Naive thymus-derived CD4-positive, alpha-beta T cell (primary cell): ENCODE measurements at regions of chr17 and their contacts with region 1.

Region 1: DNA sequence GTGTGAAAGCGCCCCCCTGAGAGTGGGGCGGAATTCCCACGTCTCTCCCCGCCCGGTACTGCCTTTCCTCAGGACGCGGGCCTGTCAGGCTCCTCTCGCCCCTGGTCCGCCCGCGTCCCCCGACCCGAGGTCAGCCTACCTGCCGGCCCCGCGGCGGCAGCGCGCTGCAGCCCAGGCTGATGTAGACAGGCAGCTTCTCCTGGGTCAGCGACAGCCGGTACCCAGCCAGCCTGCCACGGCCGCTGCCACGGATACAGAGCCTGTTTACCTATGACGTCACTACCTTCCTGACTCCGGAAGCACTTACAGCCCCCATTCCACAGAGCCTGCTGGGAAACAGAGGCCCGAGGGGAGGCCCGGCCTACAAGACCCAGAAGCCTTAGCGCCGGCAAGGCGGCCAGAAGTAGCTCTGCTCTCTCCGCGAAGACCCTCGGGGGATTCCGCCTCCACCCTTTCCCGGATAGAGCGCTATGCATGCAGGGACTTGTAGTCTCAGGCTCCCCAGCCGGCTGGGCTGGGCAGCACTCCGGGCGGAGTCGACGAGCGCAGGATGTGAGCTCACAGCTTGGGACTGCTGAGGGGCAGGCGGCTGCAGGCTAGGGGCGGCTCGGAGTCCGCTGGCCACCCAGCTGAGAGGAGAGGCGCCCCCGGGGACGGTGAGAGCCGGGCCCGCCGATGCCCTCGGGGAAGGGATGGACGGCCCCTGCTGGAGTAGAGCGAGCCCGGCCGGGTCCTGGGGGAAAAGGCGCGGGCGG is at the starts of genes IFT20 and TNFAIP1:
- DNase-seq: peak; percentile 86 to 100 (median 98)
- ATAC-seq: peak; percentile 98
- H3K4me3 ChIP-seq: peak within 1 kb of the TSS; percentile 79
- H3K4me3 Mint-ChIP-seq: peak within 1 kb of the TSS; percentile 86 to 99 (median 97)
- H3K27ac ChIP-seq: peak within 1 kb of the TSS; percentile 95
- H3K27ac Mint-ChIP-seq: peak within 1 kb of the TSS; percentile 91 to 98 (median 97)
- H3K4me1 ChIP-seq: peaks cover 16 to 19% of the 10 kb centered on the region in 2 donors
- H3K4me1 Mint-ChIP-seq: peaks cover 31 to 63% (median 59%) of the 10 kb centered on the region in 7 donors
- H3K27me3 ChIP-seq: no peaks in the 10 kb centered on the region
- H3K27me3 Mint-ChIP-seq: no peaks in the 10 kb centered on the region
- total RNA-seq, gene IFT20: 24.7 to 56.2 (median 37.0) TPM
- total RNA-seq, gene TNFAIP1: 8.0 to 26.9 (median 25.9) TPM

Region 2: DNA sequence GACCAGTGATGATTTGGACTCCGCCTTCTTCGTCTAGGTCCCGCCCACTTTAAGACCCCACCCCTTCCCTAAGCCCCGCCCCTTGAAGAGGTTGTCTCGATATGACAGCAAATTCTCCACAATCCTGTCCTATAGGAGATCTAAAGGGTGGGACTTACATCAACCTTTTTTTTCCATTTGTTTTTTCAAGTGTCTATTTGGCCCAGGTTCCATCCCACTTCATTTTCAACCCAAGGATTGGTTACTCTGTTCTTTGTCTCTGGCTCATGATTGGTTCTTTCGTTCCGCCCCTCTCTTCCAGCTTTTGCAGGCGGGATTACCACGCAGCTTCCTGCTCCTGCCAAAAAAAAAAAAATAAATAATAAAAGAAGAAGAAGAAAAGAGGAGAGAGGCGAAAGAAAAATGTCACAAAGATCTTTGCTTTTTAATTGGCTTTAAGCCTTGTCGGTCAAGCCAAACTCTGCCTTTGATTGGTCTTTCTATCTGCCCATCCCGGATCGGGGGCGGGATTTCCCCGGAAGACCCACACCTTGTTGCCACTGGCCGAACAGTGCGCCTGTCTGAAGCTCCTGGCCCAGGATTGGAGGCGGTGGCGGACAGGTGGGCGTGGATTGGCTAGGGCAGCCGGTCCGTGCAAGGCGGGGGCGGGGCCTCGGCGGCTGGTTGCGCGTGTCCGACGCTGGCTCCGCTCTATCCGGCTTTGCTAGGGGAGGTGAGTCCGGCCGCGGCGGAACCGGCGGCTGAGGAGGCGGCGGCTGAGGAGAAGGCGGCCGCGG is 294.1 kb before region 1 on chr17:
- CTCF ChIA-PET with region 1: no interaction called
- POLR2A ChIA-PET with region 1: no interaction called
- intact Hi-C with region 1: loop called (anchors 1 kb)
- DNase-seq: peak; percentile 94 to 99 (median 99)
- ATAC-seq: peak; percentile 96
- H3K4me3 ChIP-seq: peak overlapping the region; percentile 45
- H3K4me3 Mint-ChIP-seq: peak overlapping the region; percentile 82 to 92 (median 88)
- H3K27ac ChIP-seq: peak overlapping the region; percentile 71
- H3K27ac Mint-ChIP-seq: peak overlapping the region; percentile 75 to 93 (median 88)
- H3K4me1 ChIP-seq: peaks cover 28 to 40% of the 10 kb centered on the region in 2 donors
- H3K4me1 Mint-ChIP-seq: peaks cover 35 to 65% (median 60%) of the 10 kb centered on the region in 7 donors
- H3K27me3 ChIP-seq: no peaks in the 10 kb centered on the region
- H3K27me3 Mint-ChIP-seq: peaks cover 0 to 16% (median 0%) of the 10 kb centered on the region in 5 donors

Region 3: GRCh38 chr17:28295677-28296578 is 39.5 kb before region 1 on chr17:
- CTCF ChIA-PET with region 1: no interaction called
- POLR2A ChIA-PET with region 1: no interaction called
- intact Hi-C with region 1: no loop called
- DNase-seq: no peak
- ATAC-seq: no peak
- H3K4me3 ChIP-seq: no peak overlapping the region
- H3K4me3 Mint-ChIP-seq: no peak overlapping the region
- H3K27ac ChIP-seq: no peak overlapping the region
- H3K27ac Mint-ChIP-seq: no peak overlapping the region
- H3K4me1 ChIP-seq: no peaks in the 10 kb centered on the region
- H3K4me1 Mint-ChIP-seq: peaks cover 0 to 4% (median 0%) of the 10 kb centered on the region in 7 donors
- H3K27me3 ChIP-seq: no peaks in the 10 kb centered on the region
- H3K27me3 Mint-ChIP-seq: peaks cover 0 to 23% (median 19%) of the 10 kb centered on the region in 5 donors

Region 4: DNA sequence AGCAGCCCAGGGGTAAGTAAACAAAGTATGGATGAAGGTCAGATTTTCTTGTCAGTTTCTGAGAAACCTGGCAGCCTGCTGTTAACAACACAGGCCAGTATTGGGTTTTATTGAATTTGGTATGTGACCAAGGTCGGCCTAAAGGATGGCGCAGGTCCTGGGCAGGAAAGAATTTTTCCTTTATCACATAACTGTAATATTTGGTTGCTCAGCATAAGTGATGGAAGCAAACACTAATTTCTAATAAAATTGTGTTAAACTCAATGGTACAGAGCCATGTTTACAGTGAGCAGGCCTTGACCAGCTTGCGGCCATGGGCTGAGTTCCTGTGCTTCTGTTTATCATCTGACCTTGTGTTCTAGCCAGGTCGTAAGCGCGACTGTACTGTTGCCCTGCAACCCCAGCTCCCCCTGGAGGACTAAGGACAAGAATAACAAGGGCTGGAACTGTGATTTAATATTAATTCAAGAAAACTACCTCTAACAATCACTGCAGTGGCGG is 11.4 kb after region 1 on chr17:
- CTCF ChIA-PET with region 1: interaction called, 3 read pairs
- POLR2A ChIA-PET with region 1: interaction called, 15 read pairs
- intact Hi-C with region 1: no loop called
- DNase-seq: no peak
- ATAC-seq: no peak
- H3K4me3 ChIP-seq: no peak overlapping the region
- H3K4me3 Mint-ChIP-seq: no peak overlapping the region
- H3K27ac ChIP-seq: no peak overlapping the region
- H3K27ac Mint-ChIP-seq: peak overlapping the region in 1 of 9 donors; percentile 45
- H3K4me1 ChIP-seq: no peaks in the 10 kb centered on the region
- H3K4me1 Mint-ChIP-seq: peaks cover 0 to 4% (median 0%) of the 10 kb centered on the region in 7 donors
- H3K27me3 ChIP-seq: no peaks in the 10 kb centered on the region
- H3K27me3 Mint-ChIP-seq: no peaks in the 10 kb centered on the region

Region 5: DNA sequence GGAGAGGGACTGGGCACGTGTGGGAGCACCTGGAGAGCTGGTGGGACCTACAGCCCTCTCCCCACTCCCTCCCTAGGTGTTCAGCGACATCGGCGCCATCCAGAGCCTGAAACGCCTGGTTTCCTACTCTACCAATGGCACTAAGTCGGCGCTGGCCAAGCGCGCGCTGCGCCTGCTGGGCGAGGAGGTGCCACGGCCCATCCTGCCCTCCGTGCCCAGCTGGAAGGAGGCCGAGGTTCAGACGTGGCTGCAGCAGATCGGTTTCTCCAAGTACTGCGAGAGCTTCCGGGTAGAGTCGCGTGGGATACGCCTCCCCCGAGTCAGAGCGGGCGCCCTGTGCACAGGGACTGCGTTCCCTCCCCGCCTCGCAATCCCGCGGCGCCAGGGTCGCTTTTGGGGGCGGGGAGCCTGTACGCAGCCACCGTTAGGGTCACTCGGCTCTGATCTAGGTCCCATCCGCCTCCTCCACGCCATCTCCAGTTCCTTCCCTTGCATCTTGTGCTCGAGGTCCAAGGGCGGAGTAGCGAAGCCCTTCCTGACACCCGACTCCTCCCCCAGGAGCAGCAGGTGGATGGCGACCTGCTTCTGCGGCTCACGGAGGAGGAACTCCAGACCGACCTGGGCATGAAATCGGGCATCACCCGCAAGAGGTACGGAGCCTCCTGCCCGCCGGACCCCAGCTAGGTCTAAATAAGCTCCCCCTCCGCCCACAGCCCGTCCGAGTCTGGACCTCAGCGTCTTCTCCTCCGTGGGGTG is 49.1 kb after region 1 on chr17:
- CTCF ChIA-PET with region 1: no interaction called
- POLR2A ChIA-PET with region 1: interaction called, 9 read pairs
- intact Hi-C with region 1: loop called (anchors 1 kb)
- DNase-seq: peak; percentile 27 to 67 (median 57)
- ATAC-seq: peak; percentile 93
- H3K4me3 ChIP-seq: peak overlapping the region; percentile 78
- H3K4me3 Mint-ChIP-seq: peak overlapping the region; percentile 88 to 96 (median 94)
- H3K27ac ChIP-seq: peak overlapping the region; percentile 67
- H3K27ac Mint-ChIP-seq: peak overlapping the region; percentile 37 to 88 (median 77)
- H3K4me1 ChIP-seq: peaks cover 6 to 14% of the 10 kb centered on the region in 2 donors
- H3K4me1 Mint-ChIP-seq: peaks cover 8 to 48% (median 33%) of the 10 kb centered on the region in 7 donors
- H3K27me3 ChIP-seq: no peaks in the 10 kb centered on the region
- H3K27me3 Mint-ChIP-seq: peaks cover 0 to 10% (median 6%) of the 10 kb centered on the region in 5 donors

Region 6: DNA sequence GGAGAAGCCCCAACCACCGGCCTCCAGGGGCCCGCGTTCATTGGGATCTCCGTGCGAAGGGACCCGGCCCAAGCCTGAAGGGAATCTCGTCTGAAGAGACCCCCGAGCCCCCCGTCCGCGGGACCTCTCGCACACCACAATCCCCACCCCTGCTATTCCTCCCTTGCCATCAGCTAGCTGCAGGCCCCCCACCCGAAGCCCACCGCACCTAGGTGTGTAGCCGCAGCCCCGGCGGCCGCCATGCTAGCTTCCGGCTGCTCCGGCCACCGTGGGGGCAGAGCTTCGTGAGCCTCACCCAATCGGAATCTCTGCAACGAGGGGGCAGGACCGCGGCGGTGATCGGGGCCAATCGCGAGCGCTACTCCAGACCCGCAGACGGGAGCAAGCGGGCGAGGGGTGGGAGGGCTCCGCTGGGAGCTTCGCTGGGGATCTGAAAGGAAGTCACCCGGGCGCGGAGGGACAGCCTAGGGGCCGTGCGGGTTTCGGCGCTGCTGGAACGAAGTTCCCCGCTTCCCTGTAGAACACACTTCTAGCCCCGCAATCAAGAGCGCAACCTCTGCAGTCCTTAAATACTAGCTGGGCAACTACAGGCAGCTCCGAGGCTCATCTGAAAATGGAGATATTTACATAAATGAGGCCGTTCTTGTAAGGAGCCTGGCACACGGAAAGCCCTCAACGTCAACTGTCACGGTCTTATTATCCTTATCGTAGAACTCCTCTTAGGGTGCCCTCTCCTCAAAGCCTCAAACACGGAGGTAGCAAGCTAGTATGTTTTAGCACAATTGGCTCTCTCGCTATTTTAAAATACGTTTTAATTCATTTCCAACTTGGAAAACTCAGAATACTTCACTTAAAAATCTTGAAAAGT is 236.1 kb after region 1 on chr17 and contains the start of gene PIGS:
- CTCF ChIA-PET with region 1: no interaction called
- POLR2A ChIA-PET with region 1: interaction called, 3 read pairs
- intact Hi-C with region 1: loop called in 1 of 2 experiments (anchors 1 kb)
- DNase-seq: peak; percentile 72 to 93 (median 84)
- ATAC-seq: peak; percentile 99
- H3K4me3 ChIP-seq: peak within 1 kb of the TSS; percentile 78
- H3K4me3 Mint-ChIP-seq: peak within 1 kb of the TSS; percentile 93 to 99 (median 96)
- H3K27ac ChIP-seq: peak within 1 kb of the TSS; percentile 90
- H3K27ac Mint-ChIP-seq: peak within 1 kb of the TSS; percentile 84 to 97 (median 93)
- H3K4me1 ChIP-seq: peaks cover 28 to 31% of the 10 kb centered on the region in 2 donors
- H3K4me1 Mint-ChIP-seq: peaks cover 49 to 76% (median 68%) of the 10 kb centered on the region in 7 donors
- H3K27me3 ChIP-seq: no peaks in the 10 kb centered on the region
- H3K27me3 Mint-ChIP-seq: no peaks in the 10 kb centered on the region
- total RNA-seq, gene PIGS: 58.5 to 71.2 (median 62.4) TPM

Region 7: GRCh38 chr17:28644985-28645939 is 309.9 kb after region 1 on chr17 and contains the start of gene BLTP2:
- CTCF ChIA-PET with region 1: interaction called, 3 read pairs
- POLR2A ChIA-PET with region 1: interaction called, 5 read pairs
- intact Hi-C with region 1: loop called in 1 of 2 experiments (anchors 10 kb)
- DNase-seq: peak; percentile 86 to 95 (median 93)
- ATAC-seq: peak; percentile 99
- H3K4me3 ChIP-seq: peak within 1 kb of the TSS; percentile 87
- H3K4me3 Mint-ChIP-seq: peak within 1 kb of the TSS; percentile 89 to 99 (median 94)
- H3K27ac ChIP-seq: peak within 1 kb of the TSS; percentile 95
- H3K27ac Mint-ChIP-seq: peak within 1 kb of the TSS; percentile 90 to 99 (median 97)
- H3K4me1 ChIP-seq: peaks cover 26 to 29% of the 10 kb centered on the region in 2 donors
- H3K4me1 Mint-ChIP-seq: peaks cover 29 to 57% (median 39%) of the 10 kb centered on the region in 7 donors
- H3K27me3 ChIP-seq: no peaks in the 10 kb centered on the region
- H3K27me3 Mint-ChIP-seq: no peaks in the 10 kb centered on the region
- total RNA-seq, gene BLTP2: 143 to 163 (median 153) TPM